T-cell (primary cell): ENCODE measurements at regions of chr1 and their contacts with region 1.

Region 1: GRCh38 chr1:26970810-26971209 is 10.5 kb upstream of the KDF1 start:
- DNase-seq: no peak
- ATAC-seq: no peak
- H3K4me3 ChIP-seq: no peak overlapping the region
- H3K4me3 Mint-ChIP-seq: no peak overlapping the region
- H3K27ac ChIP-seq: no peak overlapping the region
- H3K27ac Mint-ChIP-seq: no peak overlapping the region
- H3K4me1 ChIP-seq: no peaks in the 10 kb centered on the region
- H3K4me1 Mint-ChIP-seq: no peaks in the 10 kb centered on the region
- H3K27me3 ChIP-seq: peaks cover 0 to 53% of the 10 kb centered on the region in 2 experiments
- H3K27me3 Mint-ChIP-seq: peaks cover 16 to 23% of the 10 kb centered on the region in 2 donors

Region 2: GRCh38 chr1:26799479-26800142 is 171.2 kb before region 1 on chr1:
- CTCF ChIA-PET with region 1: no interaction called
- POLR2A ChIA-PET with region 1: no interaction called
- DNase-seq: peak in 2 of 35 experiments; percentile 13 to 41
- ATAC-seq: peak; percentile 60 to 66 (median 66)
- H3K4me3 ChIP-seq: no peak overlapping the region
- H3K4me3 Mint-ChIP-seq: peak overlapping the region; percentile 49 to 72 (median 63)
- H3K27ac ChIP-seq: peak overlapping the region; percentile 82
- H3K27ac Mint-ChIP-seq: peak overlapping the region; percentile 96 to 97
- H3K4me1 ChIP-seq: peaks cover 13 to 33% of the 10 kb centered on the region in 2 experiments
- H3K4me1 Mint-ChIP-seq: peaks cover 33 to 36% (median 35%) of the 10 kb centered on the region in 3 donors
- H3K27me3 ChIP-seq: no peaks in the 10 kb centered on the region
- H3K27me3 Mint-ChIP-seq: no peaks in the 10 kb centered on the region

Region 3: DNA sequence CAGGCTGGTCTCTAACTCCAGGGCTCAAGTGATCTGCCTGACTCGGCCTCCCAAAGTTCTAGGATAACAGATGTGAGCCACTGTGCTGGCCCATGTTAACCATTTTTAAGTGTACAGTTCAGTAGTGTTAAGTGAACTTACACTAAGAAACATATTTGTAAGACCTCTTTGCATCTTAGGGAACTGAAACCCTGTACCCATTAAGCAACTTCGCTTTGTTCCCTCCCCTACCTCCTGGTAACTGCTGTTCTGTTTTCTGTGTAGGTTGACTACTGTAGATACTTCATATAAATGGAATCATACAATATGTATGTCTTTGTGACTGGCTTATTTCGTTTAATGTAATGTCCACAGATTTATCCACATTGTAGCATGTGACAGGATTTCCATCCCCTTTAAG is 38.3 kb before region 1 on chr1:
- CTCF ChIA-PET with region 1: no interaction called
- POLR2A ChIA-PET with region 1: interaction called in 1 of 2 experiments, 12 read pairs
- DNase-seq: no peak
- ATAC-seq: no peak
- H3K4me3 ChIP-seq: no peak overlapping the region
- H3K4me3 Mint-ChIP-seq: no peak overlapping the region
- H3K27ac ChIP-seq: no peak overlapping the region
- H3K27ac Mint-ChIP-seq: no peak overlapping the region
- H3K4me1 ChIP-seq: no peaks in the 10 kb centered on the region
- H3K4me1 Mint-ChIP-seq: peaks cover 4 to 6% (median 5%) of the 10 kb centered on the region in 3 donors
- H3K27me3 ChIP-seq: no peaks in the 10 kb centered on the region
- H3K27me3 Mint-ChIP-seq: no peaks in the 10 kb centered on the region

Region 4: DNA sequence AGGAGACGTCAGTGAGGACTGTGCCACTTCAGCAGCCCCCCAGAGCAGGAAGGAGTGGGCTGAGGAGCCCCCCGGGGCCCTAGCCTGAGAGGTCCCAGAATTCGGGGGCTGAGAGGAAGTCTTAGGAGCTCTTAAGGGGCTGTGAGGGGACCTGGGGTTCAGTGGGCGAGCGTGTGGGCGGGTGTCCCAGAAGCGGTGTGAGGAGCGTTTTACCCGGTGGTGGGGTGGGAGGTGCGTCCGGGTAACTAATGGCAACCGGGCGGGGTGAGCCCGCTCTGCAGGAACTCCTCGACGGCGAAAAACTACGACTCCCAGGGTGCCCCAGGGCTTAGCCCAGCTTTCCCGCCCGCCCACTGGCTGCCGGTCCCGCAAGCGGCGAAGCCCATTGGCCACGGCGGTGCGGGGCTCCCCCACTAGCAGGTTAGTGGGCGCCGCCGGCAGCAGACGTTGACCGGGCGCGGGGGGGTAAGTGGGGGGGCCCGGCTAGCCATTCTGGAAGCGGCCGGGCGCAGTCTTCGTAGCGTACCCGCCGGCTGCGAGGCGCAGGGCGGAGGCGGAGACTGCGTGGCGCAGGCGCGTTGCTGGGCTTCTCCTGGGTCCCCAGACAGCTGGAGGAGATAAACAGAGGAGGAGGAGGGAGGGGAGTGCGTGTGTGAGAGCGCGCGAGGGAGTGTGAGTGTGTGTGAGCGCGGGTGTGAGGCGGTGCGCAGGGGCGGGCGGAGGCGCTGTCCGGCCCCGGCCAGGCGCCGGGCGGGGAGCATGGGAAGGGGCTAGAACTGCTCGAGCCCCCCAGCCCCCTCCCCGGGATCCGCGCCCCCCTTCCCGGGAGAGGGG is 263.5 kb after region 1 on chr1 and contains the start of gene WDTC1:
- CTCF ChIA-PET with region 1: no interaction called
- POLR2A ChIA-PET with region 1: no interaction called
- DNase-seq: peak; percentile 96 to 99 (median 98)
- ATAC-seq: peak; percentile 93 to 96 (median 94)
- H3K4me3 ChIP-seq: peak within 1 kb of the TSS; percentile 64 to 74
- H3K4me3 Mint-ChIP-seq: peak within 1 kb of the TSS; percentile 87 to 97 (median 95)
- H3K27ac ChIP-seq: peak within 1 kb of the TSS; percentile 92
- H3K27ac Mint-ChIP-seq: peak within 1 kb of the TSS; percentile 91 to 92
- H3K4me1 ChIP-seq: peaks cover 16 to 27% of the 10 kb centered on the region in 2 experiments
- H3K4me1 Mint-ChIP-seq: peaks cover 29 to 33% (median 30%) of the 10 kb centered on the region in 3 donors
- H3K27me3 ChIP-seq: no peaks in the 10 kb centered on the region
- H3K27me3 Mint-ChIP-seq: no peaks in the 10 kb centered on the region
- total RNA-seq, gene WDTC1: 39.4 to 55.9 (median 50.7) TPM